Head of caudate nucleus (tissue), 42 donors: ENCODE measurements at regions of chr20 and their contacts with region 1.

Region 1: DNA sequence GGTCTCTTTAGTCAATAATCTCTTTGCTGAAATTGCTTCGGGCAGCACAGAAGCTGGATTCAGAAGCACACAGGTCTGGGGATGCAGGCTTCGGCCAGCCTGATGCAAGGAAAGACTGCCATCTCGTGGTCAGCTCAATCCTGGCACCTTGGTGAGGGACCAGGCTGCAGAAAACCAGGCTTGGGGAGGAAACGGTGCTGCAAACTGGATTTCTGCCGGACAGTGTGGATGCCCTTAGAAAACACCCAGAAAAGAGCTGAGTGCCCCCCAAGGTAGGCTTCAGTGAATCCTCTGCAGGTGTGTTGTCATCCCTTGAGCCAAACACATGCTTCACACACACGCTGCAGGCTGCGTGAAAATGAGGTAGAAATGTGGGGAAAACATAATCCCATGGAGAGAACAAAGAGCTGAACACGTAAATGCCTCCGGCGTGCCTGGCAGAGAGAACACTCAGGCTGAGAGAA is 89.8 kb upstream of the PAX1 start:
- DNase-seq: peak; percentile 72 to 96 (median 88)

Region 2: GRCh38 chr20:20860078-20860806 is 755.4 kb before region 1 on chr20:
- intact Hi-C with region 1: loop called (anchors 10 kb)
- DNase-seq: peak; percentile 81 to 99 (median 95)

Region 3: DNA sequence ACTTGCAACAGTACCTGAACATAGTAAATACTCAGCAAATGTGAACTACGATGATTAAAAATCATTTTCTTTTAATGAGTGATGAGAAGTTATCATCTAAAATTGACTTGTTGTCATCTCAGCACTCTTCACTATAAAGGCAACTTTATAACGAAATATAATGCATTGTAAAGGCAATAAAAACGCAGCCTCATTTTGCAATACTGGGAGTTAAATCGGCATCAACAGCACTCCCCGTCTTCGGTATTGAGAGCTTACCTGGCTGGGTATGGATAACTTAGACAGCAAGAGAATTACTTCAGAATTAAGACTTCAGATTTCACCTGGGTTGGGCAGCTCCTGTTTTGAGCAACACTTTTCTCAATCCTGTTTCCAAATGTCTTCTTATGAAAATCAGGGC is 122.6 kb before region 1 on chr20:
- intact Hi-C with region 1: no loop called
- DNase-seq: no peak

Region 4: DNA sequence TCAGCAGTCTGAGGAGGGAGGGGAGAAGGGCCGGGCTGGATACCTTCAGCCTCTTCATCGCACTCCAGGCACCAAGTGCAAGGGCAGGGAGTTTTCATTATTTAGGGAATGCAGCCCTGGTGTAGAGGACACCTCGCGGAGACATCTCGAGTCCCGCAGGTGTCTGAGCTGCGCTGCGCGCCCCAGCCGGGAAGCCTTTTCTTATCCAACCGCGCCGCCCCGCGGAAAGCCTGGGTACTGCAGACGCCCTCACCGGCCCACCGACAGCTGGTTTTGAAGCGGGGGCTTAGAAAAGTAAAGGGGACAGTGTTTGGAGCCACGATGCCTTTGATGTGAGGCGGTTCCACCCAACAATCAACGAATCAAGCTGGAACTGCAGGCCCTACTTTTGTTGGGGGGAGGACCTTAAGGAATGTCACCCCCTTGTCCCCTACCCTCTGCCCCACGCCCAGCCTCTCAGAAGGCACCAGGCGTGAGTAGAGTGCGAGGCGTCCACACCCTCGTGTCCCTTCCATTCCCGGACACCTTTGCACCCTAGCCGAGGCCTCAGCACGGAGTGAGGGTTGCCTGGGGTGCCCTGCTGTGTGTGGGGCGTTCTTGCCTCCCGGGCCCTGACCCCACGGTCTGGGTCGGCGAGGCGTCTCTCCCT is 110.4 kb before region 1 on chr20:
- intact Hi-C with region 1: loop called (anchors 5 kb)
- DNase-seq: peak in 41 of 42 donors; percentile 70 to 94 (median 84)

Region 5: DNA sequence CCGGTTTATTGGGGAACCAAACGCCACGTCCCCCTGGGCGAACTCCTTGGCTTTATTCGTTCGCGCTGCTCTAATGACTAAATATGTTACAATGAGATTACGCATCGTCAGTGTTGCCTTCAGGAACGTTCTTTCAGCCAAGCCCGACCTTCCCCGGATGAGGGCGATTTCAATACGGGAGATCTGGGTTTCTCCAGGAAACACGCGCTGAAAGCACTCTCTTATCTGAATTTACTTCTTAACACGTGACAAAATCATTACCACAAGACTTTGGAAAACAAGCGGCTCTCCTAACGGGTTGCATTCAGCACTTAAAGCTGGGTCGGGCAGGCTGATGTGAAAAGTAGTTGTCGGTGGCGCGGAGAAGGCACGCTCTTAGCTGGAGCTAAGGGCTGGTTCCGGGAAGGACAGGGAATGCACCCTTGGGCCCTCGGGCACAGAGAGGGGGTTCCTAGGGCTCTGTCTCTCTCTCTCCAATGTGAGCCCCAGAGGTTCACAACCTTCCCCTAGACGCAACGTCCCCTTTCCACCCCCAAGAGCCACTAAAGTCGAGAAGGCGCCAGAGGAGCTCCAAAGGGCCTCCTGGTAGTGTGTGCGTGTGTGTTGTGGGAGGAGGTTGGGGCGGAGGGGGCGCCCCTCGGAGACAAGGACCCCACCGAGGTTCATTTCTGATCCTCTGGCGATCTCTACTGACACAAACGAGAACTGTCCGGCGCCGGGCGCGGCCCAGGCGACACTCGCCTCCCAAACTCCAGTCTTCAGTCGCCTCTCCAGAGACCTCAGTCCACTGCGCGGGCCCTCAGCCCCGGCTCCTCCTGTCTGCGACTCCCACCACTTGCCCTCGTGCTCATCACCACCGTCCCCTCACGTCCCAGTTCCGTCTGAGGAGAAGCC is 94.7 kb before region 1 on chr20:
- intact Hi-C with region 1: loop called (anchors 5 kb)
- DNase-seq: peak in 34 of 42 donors; percentile 51 to 87 (median 74)

Region 6: DNA sequence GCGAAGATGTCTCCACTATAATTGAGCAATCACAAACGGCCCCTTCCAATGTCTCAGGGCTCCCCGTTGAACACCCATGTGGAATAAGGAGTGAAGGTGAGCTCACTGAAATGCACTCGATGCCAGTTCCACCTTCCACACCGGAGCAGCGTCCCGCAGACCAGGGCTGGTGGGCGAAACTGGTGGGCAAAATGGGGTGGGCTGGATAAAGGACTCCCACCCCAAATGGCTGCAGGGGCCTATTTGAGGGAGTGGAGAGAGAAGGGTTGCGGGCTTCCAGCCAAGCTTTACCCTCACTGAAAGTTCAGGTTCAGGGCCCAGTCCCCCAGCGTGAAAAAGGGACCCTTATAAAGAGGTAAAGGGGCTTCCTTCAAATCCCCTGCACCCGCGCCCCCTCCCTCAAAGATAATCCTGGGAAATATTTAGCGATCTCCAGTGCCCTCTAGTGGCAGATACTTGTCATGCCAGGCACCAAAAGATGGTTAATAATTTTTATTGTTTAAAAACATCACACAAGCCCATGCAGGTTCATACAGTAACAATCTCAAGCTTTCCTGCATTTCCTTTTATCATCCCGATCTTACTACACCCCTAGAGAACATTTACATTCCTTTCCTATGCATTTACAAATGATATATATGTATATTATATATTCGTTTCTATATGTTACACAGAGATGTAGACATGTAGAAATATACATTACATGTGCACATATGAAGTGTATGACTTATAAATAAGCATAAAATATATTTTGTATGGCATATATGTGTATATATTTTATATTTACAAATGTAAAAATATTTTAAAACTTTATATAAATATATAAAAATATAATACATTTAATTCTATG is 43.6 kb before region 1 on chr20:
- intact Hi-C with region 1: loop called (anchors 5 kb)
- DNase-seq: peak in 31 of 42 donors; percentile 4 to 81 (median 39)